Panc1 (cell line): ENCODE measurements at regions of chr10 and their contacts with region 1.

Region 1: DNA sequence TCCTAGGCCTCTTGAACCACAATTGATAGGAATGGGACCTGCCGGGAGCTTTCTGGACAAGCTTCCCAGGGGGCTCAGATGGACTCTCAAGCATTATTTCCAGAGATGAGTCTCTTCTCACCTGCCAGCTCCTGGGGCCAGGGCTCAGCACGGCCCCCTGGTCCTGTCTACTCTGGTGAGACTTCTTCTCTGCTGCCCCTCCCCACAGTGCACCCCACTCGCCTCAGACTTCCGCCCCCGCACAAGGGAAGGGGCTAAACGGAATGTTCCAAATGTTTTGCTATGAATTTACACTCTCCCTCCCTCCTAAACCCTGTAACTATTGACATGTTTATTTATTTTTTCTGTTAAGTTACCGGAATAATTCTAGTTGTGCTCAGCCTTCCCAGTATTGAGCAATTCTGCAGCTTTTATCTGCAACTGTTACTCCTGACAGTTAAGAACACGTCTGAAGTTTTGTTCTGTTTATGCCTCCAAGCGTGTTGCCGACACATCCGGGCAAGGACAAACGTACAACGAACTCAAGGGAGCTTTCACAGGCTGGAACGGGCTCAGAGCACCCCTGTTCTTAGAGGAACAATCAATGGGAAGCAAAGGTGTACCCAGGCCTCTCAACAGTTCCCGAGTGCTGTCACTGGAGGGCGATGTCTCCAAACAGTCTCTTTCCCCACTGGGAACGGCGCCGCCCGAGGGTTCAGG is 55.2 kb downstream of the FHIP2A start:
- DNase-seq: no peak
- ATAC-seq: peak; percentile 88
- H3K4me3 ChIP-seq: no peak overlapping the region
- H3K27ac ChIP-seq: no peak overlapping the region
- H3K4me1 ChIP-seq: peaks cover 8% of the 10 kb centered on the region
- H3K27me3 ChIP-seq: no peaks in the 10 kb centered on the region
- CTCF ChIP-seq: peak; percentile 96

Region 2: GRCh38 chr10:114541081-114541796 is 335.5 kb before region 1 on chr10:
- CTCF ChIA-PET with region 1: interaction called, 19 read pairs
- POLR2A ChIA-PET with region 1: no interaction called
- in situ Hi-C with region 1: no loop called
- intact Hi-C with region 1: no loop called
- DNase-seq: no peak
- ATAC-seq: 0 out of 2 replicates have a peak, but pooled peaks have one; percentile 33
- H3K4me3 ChIP-seq: no peak overlapping the region
- H3K27ac ChIP-seq: no peak overlapping the region
- H3K4me1 ChIP-seq: no peaks in the 10 kb centered on the region
- H3K27me3 ChIP-seq: no peaks in the 10 kb centered on the region
- CTCF ChIP-seq: no peak

Region 3: GRCh38 chr10:115129752-115130151 is 253.0 kb after region 1 on chr10:
- CTCF ChIA-PET with region 1: interaction called, 26 read pairs
- POLR2A ChIA-PET with region 1: no interaction called
- in situ Hi-C with region 1: no loop called
- intact Hi-C with region 1: loop called (anchors 1 kb)
- DNase-seq: peak; percentile 20
- ATAC-seq: peak; percentile 70; the same call in 1 of the 2 replicates
- H3K4me3 ChIP-seq: no peak overlapping the region
- H3K27ac ChIP-seq: no peak overlapping the region
- H3K4me1 ChIP-seq: no peaks in the 10 kb centered on the region
- H3K27me3 ChIP-seq: no peaks in the 10 kb centered on the region
- CTCF ChIP-seq: no peak; the same call in 1 of the 2 replicates

Region 4: GRCh38 chr10:115141254-115141653 is 264.5 kb after region 1 on chr10:
- CTCF ChIA-PET with region 1: no interaction called
- POLR2A ChIA-PET with region 1: no interaction called
- in situ Hi-C with region 1: no loop called
- intact Hi-C with region 1: no loop called
- DNase-seq: no peak
- ATAC-seq: no peak
- H3K4me3 ChIP-seq: no peak overlapping the region
- H3K27ac ChIP-seq: no peak overlapping the region
- H3K4me1 ChIP-seq: no peaks in the 10 kb centered on the region
- H3K27me3 ChIP-seq: no peaks in the 10 kb centered on the region
- CTCF ChIP-seq: peak; percentile 60; the same call in 1 of the 2 replicates